K562 (cell line): ENCODE measurements at regions of chr5 and their contacts with region 1.

Region 1: GRCh38 chr5:170100066-170100943 is 5.4 kb upstream of the FOXI1 start:
- DNase-seq: peak; percentile 46 to 80 (median 56)
- ATAC-seq: peak; percentile 88
- H3K4me3 ChIP-seq: no peak overlapping the region
- H3K27ac ChIP-seq: no peak overlapping the region
- H3K4me1 ChIP-seq: no peaks in the 10 kb centered on the region
- H3K27me3 ChIP-seq: peaks cover 0 to 23% of the 10 kb centered on the region in 2 experiments; a peak in 3 of 5 replicates
- CTCF ChIP-seq: peak; percentile 71 to 88 (median 74)
- EP300 ChIP-seq: no peak
- POLR2A ChIP-seq: no peak
- RAD21 ChIP-seq: peak; percentile 91 to 94

Region 2: DNA sequence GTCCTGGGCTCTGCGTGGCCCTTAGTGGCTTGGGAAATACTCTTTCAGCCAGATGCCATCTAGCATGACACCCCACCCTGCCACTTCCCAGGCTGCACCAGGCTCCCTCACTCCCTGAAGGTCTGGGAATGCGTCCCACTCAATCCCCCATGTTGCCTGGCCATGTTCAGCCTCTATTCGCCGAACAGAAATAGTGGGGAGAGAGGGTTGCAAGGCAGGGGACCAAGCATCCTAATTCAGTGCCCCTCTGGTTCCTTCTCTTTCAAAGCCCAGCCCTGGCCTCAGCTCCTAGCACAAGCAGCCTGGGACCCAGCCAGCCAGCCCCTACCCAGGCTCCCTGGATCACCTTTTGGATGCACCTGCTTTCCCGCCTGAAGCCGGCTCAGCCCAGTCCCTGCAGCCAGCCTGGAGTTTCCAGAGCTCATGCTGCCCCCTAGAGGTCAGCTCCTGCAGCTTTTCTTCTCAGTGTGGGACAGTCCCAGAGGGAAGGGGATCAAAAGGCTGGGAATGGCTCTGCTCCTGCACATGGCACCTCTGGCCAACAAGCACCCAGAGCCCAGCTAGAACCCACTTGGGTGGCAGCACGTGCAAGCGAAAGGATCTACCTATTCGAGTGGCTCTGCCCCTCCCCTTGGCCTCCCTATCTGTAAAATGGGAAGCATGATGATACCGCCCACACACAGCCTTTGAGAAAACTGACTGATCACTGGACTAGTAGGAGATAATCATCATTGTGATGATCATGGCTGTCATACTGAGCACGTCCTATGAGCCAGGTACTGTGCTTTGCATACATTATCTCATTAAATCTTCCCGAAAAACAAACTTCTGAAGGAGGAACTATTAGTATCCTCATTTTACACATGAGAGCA is 83.7 kb after region 1 on chr5:
- CTCF ChIA-PET with region 1: interaction called, 36 read pairs
- POLR2A ChIA-PET with region 1: interaction called, 4 read pairs
- in situ Hi-C with region 1: loop called (anchors 5 kb)
- intact Hi-C with region 1: loop called (anchors 1 kb)
- DNase-seq: peak; percentile 54 to 74 (median 69)
- ATAC-seq: peak; percentile 98
- H3K4me3 ChIP-seq: no peak overlapping the region
- H3K27ac ChIP-seq: no peak overlapping the region
- H3K4me1 ChIP-seq: no peaks in the 10 kb centered on the region
- H3K27me3 ChIP-seq: peaks cover 9 to 44% of the 10 kb centered on the region in 2 experiments; a peak in 4 of 5 replicates
- CTCF ChIP-seq: peak; percentile 81 to 91 (median 89)
- EP300 ChIP-seq: no peak
- POLR2A ChIP-seq: no peak
- RAD21 ChIP-seq: peak; percentile 79 to 92

Region 3: DNA sequence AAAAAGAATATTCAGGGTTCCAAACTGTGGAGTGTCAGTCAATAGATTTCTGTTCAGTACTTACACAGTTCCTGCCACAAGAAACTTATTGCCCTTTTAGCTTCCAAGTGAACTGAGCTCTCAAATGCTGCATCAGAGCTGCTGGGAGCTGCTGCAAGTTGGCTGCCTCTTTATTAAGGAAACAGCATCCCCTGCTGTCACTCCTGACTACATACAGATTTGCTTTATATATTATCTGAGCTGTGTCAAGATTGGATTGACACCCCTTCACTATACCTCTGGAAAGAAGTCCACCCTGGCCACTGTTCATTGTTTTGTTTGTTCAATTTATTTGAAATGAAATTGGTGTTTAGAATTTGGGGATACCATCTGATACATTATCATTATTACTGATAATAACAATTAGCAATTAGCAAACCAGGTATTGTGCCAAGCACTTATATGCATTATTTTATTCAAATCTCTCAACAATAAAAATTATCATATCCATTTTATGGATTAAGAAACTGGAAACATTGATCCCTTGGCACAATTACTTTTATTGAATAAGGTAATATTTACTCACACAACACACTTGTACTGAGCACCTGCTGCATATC is 116.1 kb after region 1 on chr5:
- CTCF ChIA-PET with region 1: interaction called, 48 read pairs
- POLR2A ChIA-PET with region 1: no interaction called
- in situ Hi-C with region 1: no loop called
- intact Hi-C with region 1: loop called (anchors 1 kb)
- DNase-seq: peak; percentile 17 to 53 (median 38)
- ATAC-seq: peak; percentile 78
- H3K4me3 ChIP-seq: no peak overlapping the region
- H3K27ac ChIP-seq: no peak overlapping the region
- H3K4me1 ChIP-seq: no peaks in the 10 kb centered on the region
- H3K27me3 ChIP-seq: peaks cover 0 to 5% of the 10 kb centered on the region in 2 experiments; a peak in 2 of 5 replicates
- CTCF ChIP-seq: peak; percentile 68 to 91 (median 69)
- EP300 ChIP-seq: no peak
- POLR2A ChIP-seq: no peak
- RAD21 ChIP-seq: peak; percentile 96 to 97

Region 4: DNA sequence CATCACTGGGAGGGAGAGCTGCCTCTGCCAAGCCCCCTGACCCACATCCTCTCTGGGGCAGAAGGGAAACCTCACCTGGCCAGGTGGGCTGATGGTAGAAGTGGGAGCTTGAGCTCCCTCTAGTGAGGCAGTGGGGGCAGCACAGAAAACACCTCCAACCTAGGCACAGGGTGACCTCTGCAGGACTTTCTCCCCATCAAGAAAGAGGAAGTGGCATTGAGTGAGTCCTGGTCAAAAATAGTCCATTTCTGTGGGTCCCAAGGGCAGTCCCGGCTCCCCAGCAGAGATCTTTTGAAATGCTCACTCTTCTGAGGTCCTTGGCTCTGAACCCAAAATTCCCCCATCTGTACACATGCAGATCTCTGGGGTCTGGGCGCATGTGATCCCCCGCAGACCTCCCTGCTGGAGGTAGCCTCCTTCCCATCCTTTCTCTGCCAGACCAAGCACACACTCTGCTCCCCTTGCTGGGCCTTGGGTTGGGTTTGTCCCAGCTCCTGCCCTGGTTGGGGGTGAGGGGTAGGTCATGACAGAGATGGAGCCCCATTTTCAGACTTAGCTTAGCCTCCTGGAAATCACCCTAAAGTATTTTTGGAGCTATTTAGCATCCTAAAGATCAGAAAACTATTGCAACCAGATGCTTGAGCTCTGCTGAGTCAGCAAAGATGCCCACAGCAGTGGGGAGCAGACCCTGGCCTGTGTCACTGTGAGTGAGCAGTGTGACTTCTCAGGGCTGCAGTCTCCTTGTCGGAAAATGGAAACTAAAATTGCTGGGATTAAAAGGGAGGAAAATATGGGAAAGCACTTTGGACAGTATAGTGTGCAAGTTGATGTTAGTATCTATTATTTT is 238.9 kb after region 1 on chr5:
- CTCF ChIA-PET with region 1: interaction called, 4 read pairs
- POLR2A ChIA-PET with region 1: no interaction called
- in situ Hi-C with region 1: no loop called
- intact Hi-C with region 1: loop called (anchors 2 kb)
- DNase-seq: peak; percentile 46 to 77 (median 60)
- ATAC-seq: peak; percentile 89
- H3K4me3 ChIP-seq: no peak overlapping the region
- H3K27ac ChIP-seq: no peak overlapping the region
- H3K4me1 ChIP-seq: peaks cover 0 to 9% of the 10 kb centered on the region in 2 experiments; a peak in 3 of 5 replicates
- H3K27me3 ChIP-seq: no peaks in the 10 kb centered on the region; a peak in 3 of 5 replicates
- CTCF ChIP-seq: peak; percentile 95 to 100 (median 99)
- EP300 ChIP-seq: no peak
- POLR2A ChIP-seq: no peak
- RAD21 ChIP-seq: peak; percentile 98 to 100

Region 5: GRCh38 chr5:170411100-170411499 is 310.8 kb after region 1 on chr5:
- CTCF ChIA-PET with region 1: no interaction called
- POLR2A ChIA-PET with region 1: no interaction called
- in situ Hi-C with region 1: loop called (anchors 10 kb)
- intact Hi-C with region 1: no loop called
- DNase-seq: peak in 3 of 4 experiments; percentile 14 to 35 (median 32)
- ATAC-seq: no peak
- H3K4me3 ChIP-seq: no peak overlapping the region
- H3K27ac ChIP-seq: no peak overlapping the region
- H3K4me1 ChIP-seq: no peaks in the 10 kb centered on the region
- H3K27me3 ChIP-seq: peaks cover 0 to 12% of the 10 kb centered on the region in 2 experiments; a peak in 1 of 5 replicates
- CTCF ChIP-seq: peak; percentile 32 to 53 (median 38); a peak in 4 of 6 replicates
- EP300 ChIP-seq: no peak
- POLR2A ChIP-seq: no peak
- RAD21 ChIP-seq: no peak

Region 6: GRCh38 chr5:170420780-170421412 is 320.6 kb after region 1 on chr5:
- CTCF ChIA-PET with region 1: no interaction called
- POLR2A ChIA-PET with region 1: no interaction called
- in situ Hi-C with region 1: loop called (anchors 10 kb)
- intact Hi-C with region 1: loop called (anchors 2 kb)
- DNase-seq: peak; percentile 70 to 72 (median 72)
- ATAC-seq: peak; percentile 89
- H3K4me3 ChIP-seq: no peak overlapping the region
- H3K27ac ChIP-seq: no peak overlapping the region
- H3K4me1 ChIP-seq: no peaks in the 10 kb centered on the region
- H3K27me3 ChIP-seq: peaks cover 0 to 11% of the 10 kb centered on the region in 2 experiments; a peak in 2 of 5 replicates
- CTCF ChIP-seq: peak; percentile 65 to 74 (median 73)
- EP300 ChIP-seq: no peak
- POLR2A ChIP-seq: no peak
- RAD21 ChIP-seq: peak; percentile 66 to 79

Region 7: GRCh38 chr5:170623576-170624181 is 523.4 kb after region 1 on chr5:
- CTCF ChIA-PET with region 1: interaction called, 3 read pairs
- POLR2A ChIA-PET with region 1: no interaction called
- in situ Hi-C with region 1: no loop called
- intact Hi-C with region 1: loop called (anchors 10 kb)
- DNase-seq: peak; percentile 55 to 65 (median 56)
- ATAC-seq: peak; percentile 93
- H3K4me3 ChIP-seq: no peak overlapping the region
- H3K27ac ChIP-seq: no peak overlapping the region
- H3K4me1 ChIP-seq: no peaks in the 10 kb centered on the region
- H3K27me3 ChIP-seq: peaks cover 0 to 9% of the 10 kb centered on the region in 2 experiments; a peak in 1 of 5 replicates
- CTCF ChIP-seq: peak; percentile 62 to 78 (median 73)
- EP300 ChIP-seq: no peak
- POLR2A ChIP-seq: no peak
- RAD21 ChIP-seq: peak in 1 of 2 experiments; percentile 65; a peak in 3 of 4 replicates